Activated naive CD4-positive, alpha-beta T cell treated with anti-CD3 and anti-CD28 coated beads for 36 hours (primary cell): ENCODE measurements at regions of chr14 and their contacts with region 1.

Region 1: DNA sequence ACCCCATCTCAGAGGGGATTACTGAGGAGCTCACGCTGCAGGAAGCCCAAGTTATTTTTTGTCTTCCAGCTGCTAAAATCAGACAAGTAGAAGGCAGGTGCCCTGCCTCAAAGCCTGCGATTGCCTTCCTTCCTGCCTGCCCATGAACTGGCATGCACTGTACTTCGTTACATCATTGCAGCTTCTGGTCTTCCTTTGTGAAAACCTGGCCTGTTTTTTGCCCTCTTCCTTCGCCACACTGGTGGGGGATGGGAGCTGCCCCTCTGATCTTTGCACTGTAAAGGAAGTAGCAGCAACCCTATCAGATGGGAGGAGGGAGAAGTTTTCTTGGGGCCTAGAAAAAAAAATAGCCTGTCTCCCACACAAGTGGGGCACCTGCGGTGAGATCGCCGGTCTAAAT is 1098.7 kb downstream of the BCL11B start:
- DNase-seq: peak; percentile 78
- H3K4me3 Mint-ChIP-seq: peak overlapping the region; percentile 49
- H3K27ac Mint-ChIP-seq: peak overlapping the region; percentile 98
- H3K4me1 Mint-ChIP-seq: peaks cover 97% of the 10 kb centered on the region
- H3K27me3 Mint-ChIP-seq: no peaks in the 10 kb centered on the region

Region 2: DNA sequence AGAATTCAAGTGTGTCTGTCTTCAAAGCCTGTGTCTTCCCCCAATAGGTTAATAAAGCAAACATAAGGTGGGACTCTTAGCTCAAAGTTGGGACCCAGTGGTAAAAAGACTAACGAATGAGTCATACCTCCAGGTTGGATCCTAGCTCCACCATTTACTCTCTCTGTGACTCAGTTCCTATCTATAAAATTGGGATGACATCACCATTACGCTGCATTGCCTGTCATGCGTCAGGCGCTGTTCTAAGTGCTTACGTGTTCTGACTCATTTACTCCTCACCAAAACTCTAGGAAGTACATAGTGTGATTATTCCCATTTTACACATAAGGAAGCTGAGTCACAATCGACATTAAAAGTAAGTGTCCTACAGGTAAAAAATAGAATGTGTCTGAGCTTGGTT is 460.3 kb before region 1 on chr14:
- CTCF ChIA-PET with region 1: no interaction called
- intact Hi-C with region 1: loop called (anchors 5 kb)
- DNase-seq: peak; percentile 75
- H3K4me3 Mint-ChIP-seq: no peak overlapping the region
- H3K27ac Mint-ChIP-seq: peak overlapping the region; percentile 86
- H3K4me1 Mint-ChIP-seq: peaks cover 56% of the 10 kb centered on the region
- H3K27me3 Mint-ChIP-seq: no peaks in the 10 kb centered on the region

Region 3: GRCh38 chr14:98103705-98104104 is 69.6 kb before region 1 on chr14:
- CTCF ChIA-PET with region 1: no interaction called
- intact Hi-C with region 1: loop called (anchors 2 kb)
- DNase-seq: peak; percentile 61
- H3K4me3 Mint-ChIP-seq: no peak overlapping the region
- H3K27ac Mint-ChIP-seq: no peak overlapping the region
- H3K4me1 Mint-ChIP-seq: peaks cover 49% of the 10 kb centered on the region
- H3K27me3 Mint-ChIP-seq: no peaks in the 10 kb centered on the region

Region 4: DNA sequence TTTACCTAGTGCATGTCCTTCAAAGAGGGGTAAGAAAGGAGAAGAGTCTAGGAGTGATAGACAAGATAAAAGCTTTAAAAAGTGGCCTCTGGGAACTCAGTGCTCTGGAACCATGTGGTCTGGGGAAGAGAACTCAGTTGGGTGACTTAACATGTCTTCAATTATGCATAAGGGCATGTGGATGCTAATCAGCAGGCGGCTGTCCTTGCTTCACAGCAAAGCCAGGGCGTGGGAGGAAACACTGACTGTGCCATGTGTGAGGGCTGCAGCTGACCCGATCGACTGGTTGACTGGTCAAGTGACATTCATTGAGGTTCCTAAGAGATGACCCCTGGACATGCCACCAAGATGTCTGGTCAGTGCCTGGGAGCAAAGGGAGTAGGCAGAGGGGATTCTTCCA is 44.9 kb after region 1 on chr14:
- CTCF ChIA-PET with region 1: interaction called, 4 read pairs
- intact Hi-C with region 1: loop called (anchors 2 kb)
- DNase-seq: no peak
- H3K4me3 Mint-ChIP-seq: no peak overlapping the region
- H3K27ac Mint-ChIP-seq: no peak overlapping the region
- H3K4me1 Mint-ChIP-seq: peaks cover 50% of the 10 kb centered on the region
- H3K27me3 Mint-ChIP-seq: no peaks in the 10 kb centered on the region

Region 5: DNA sequence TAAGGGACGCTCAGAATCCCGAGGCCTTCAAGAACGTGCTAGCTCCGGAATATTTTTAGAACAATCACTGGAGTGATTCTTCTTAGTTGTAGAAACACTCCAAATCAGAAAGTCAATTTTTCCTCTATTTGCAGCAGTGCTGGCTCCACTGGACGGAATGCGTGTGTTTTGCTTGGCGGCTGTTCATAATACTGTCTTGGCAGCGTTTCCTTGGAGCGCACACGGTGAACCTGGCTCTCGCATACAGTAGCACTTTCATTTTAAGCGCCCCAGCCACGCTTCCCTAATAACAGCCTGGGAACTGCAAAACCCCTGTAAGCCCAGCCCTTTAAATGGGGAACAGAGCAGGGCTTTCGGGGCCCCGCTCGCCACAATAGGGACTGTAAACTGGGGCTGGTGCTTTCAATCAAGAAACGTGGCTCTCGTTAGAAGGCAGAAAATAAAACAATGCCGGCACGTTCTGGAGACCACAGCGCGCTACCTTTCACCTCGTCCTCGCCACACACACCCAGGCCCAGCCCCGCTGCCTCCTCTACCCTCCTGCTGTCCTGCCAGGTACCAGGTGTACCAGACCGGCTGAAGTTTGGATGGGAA is 1018.8 kb after region 1 on chr14:
- CTCF ChIA-PET with region 1: no interaction called
- intact Hi-C with region 1: loop called (anchors 5 kb)
- DNase-seq: peak; percentile 59
- H3K4me3 Mint-ChIP-seq: peak overlapping the region; percentile 77
- H3K27ac Mint-ChIP-seq: peak overlapping the region; percentile 95
- H3K4me1 Mint-ChIP-seq: peaks cover 81% of the 10 kb centered on the region
- H3K27me3 Mint-ChIP-seq: no peaks in the 10 kb centered on the region